Mammary epithelial cell (primary cell): ENCODE measurements at regions of chr4 and their contacts with region 1.

Region 1: GRCh38 chr4:129641179-129641578 is 545.2 kb downstream of the C4orf33 start:
- DNase-seq: peak; percentile 29
- H3K4me3 ChIP-seq: no peak overlapping the region
- H3K27ac ChIP-seq: no peak overlapping the region
- H3K4me1 ChIP-seq: no peaks in the 10 kb centered on the region
- H3K27me3 ChIP-seq: peaks cover 2% of the 10 kb centered on the region
- CTCF ChIP-seq: peak; percentile 79

Region 2: GRCh38 chr4:129344058-129344457 is 297.1 kb before region 1 on chr4:
- CTCF ChIA-PET with region 1: no interaction called
- dilution Hi-C with region 1: no loop called
- in situ Hi-C with region 1: no loop called
- intact Hi-C with region 1: loop called (anchors 1 kb)
- DNase-seq: peak; percentile 40
- H3K4me3 ChIP-seq: no peak overlapping the region
- H3K27ac ChIP-seq: no peak overlapping the region
- H3K4me1 ChIP-seq: peaks cover 8% of the 10 kb centered on the region
- H3K27me3 ChIP-seq: no peaks in the 10 kb centered on the region
- CTCF ChIP-seq: peak; percentile 67 to 74

Region 3: GRCh38 chr4:129526814-129527213 is 114.4 kb before region 1 on chr4:
- CTCF ChIA-PET with region 1: no interaction called
- dilution Hi-C with region 1: no loop called
- in situ Hi-C with region 1: no loop called
- intact Hi-C with region 1: loop called (anchors 2 kb)
- DNase-seq: no peak
- H3K4me3 ChIP-seq: no peak overlapping the region
- H3K27ac ChIP-seq: no peak overlapping the region
- H3K4me1 ChIP-seq: no peaks in the 10 kb centered on the region
- H3K27me3 ChIP-seq: no peaks in the 10 kb centered on the region
- CTCF ChIP-seq: peak; percentile 11 to 39

Region 4: GRCh38 chr4:129682586-129682985 is 41.4 kb after region 1 on chr4:
- CTCF ChIA-PET with region 1: no interaction called
- dilution Hi-C with region 1: no loop called
- in situ Hi-C with region 1: no loop called
- intact Hi-C with region 1: no loop called
- DNase-seq: no peak
- H3K4me3 ChIP-seq: no peak overlapping the region
- H3K27ac ChIP-seq: no peak overlapping the region
- H3K4me1 ChIP-seq: no peaks in the 10 kb centered on the region
- H3K27me3 ChIP-seq: no peaks in the 10 kb centered on the region
- CTCF ChIP-seq: no peak